ENCODE measurements at regions of chr12 and their contacts with region 1.

Region 1: DNA sequence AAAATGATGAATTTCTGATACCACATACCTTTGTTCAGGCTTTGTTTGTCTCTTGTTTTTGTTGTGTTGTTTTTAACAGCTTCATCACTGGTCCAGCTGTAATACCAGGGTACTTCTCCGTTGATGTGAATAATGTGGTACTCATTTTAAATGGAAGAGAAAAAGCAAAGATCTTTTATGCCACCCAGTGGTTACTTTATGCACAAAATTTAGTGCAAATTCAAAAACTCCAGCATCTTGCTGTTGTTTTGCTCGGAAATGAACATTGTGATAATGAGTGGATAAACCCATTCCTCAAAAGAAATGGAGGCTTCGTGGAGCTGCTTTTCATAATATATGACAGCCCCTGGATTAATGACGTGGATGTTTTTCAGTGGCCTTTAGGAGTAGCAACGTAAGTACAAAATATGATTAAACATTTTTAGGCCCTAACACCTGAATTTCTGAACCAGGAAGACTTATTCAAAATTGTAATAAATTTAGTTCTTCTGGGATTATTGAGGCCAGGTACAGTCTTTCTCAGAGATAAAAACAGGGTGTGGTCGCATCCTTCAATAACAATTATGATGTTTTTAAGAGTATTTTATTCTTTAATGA is 22.4 kb downstream of the RXYLT1 start:
- DNase-seq: no peak
- ATAC-seq: no peak
- H3K4me3 ChIP-seq: no peak overlapping the region
- H3K27ac ChIP-seq: no peak overlapping the region
- H3K4me1 ChIP-seq: no peaks in the 10 kb centered on the region
- H3K27me3 ChIP-seq: no peaks in the 10 kb centered on the region
- CTCF ChIP-seq: peak in 3 of 5 experiments; percentile 21 to 52 (median 51)
- POLR2A ChIP-seq: no peak

Region 2: DNA sequence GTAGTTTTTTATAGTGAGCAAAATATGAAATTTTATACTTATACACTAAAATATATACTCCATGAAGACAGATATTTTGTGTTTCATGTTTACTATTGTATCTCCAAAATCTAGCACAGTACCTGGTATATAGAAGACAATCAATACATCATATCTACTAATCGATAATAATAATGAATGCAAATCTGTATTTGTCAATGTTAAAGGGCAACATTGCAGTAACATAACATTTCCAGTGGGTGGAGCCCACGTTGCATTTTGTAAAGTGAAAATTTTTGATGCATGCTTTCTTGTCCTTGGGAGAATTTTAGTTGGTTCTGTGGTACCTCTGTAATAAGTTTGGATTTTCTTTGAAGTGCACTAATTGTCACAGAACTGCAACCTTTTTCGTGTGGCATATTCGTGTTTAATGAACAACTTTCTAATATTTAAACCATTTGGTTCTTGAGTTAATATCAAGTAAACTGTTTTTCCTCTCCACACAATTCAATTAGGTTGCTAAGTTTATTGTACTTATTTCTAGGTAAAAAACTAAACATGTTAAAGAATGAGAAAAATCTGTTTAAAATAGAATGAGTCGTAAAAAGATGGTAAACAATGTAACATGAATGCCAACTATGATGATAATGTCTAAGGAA is 698.5 kb before region 1 on chr12:
- in situ Hi-C with region 1: loop called in 1 of 4 experiments (anchors 25 kb)
- intact Hi-C with region 1: loop called (anchors 10 kb)
- DNase-seq: no peak
- ATAC-seq: no peak
- H3K4me3 ChIP-seq: no peak overlapping the region
- H3K27ac ChIP-seq: no peak overlapping the region
- H3K4me1 ChIP-seq: no peaks in the 10 kb centered on the region
- H3K27me3 ChIP-seq: no peaks in the 10 kb centered on the region
- CTCF ChIP-seq: peak in 4 of 5 experiments; percentile 12 to 61 (median 41)
- POLR2A ChIP-seq: no peak

Region 3: GRCh38 chr12:63882844-63883243 is 80.7 kb after region 1 on chr12:
- in situ Hi-C with region 1: no loop called
- intact Hi-C with region 1: no loop called
- DNase-seq: peak; percentile 29 to 37
- ATAC-seq: peak; percentile 71 to 83
- H3K4me3 ChIP-seq: no peak overlapping the region
- H3K27ac ChIP-seq: peak overlapping the region in 3 of 4 donors; percentile 11 to 53 (median 45)
- H3K4me1 ChIP-seq: peaks cover 0 to 4% of the 10 kb centered on the region in 2 donors
- H3K27me3 ChIP-seq: no peaks in the 10 kb centered on the region
- CTCF ChIP-seq: no peak
- POLR2A ChIP-seq: no peak

Region 4: DNA sequence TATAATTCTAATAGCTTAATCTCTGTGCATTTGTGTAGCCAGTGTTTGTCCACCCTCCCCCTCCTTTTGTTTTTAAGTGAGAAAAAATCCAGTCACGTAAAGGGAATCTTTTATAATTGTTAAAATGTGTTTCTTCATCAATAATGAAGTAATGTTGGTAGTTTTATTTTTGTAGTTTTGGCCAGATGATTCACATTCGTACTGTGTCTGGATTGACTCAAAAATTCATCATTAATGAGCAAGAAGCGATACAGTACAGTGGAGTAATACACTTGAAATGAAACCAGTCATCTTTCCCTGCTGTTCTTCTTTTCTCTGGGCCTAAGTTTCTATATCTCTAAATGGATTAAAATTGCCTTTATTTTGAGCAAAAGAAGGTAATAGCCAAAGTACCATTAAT is 128.9 kb after region 1 on chr12:
- in situ Hi-C with region 1: no loop called
- intact Hi-C with region 1: no loop called
- DNase-seq: no peak
- ATAC-seq: no peak
- H3K4me3 ChIP-seq: no peak overlapping the region
- H3K27ac ChIP-seq: no peak overlapping the region
- H3K4me1 ChIP-seq: no peaks in the 10 kb centered on the region
- H3K27me3 ChIP-seq: no peaks in the 10 kb centered on the region
- CTCF ChIP-seq: no peak
- POLR2A ChIP-seq: no peak

Region 5: GRCh38 chr12:64039281-64039871 is 237.3 kb after region 1 on chr12:
- in situ Hi-C with region 1: no loop called
- intact Hi-C with region 1: no loop called
- DNase-seq: no peak
- ATAC-seq: peak; percentile 44 to 54
- H3K4me3 ChIP-seq: no peak overlapping the region
- H3K27ac ChIP-seq: no peak overlapping the region
- H3K4me1 ChIP-seq: peaks cover 0 to 7% of the 10 kb centered on the region in 2 donors
- H3K27me3 ChIP-seq: no peaks in the 10 kb centered on the region
- CTCF ChIP-seq: no peak
- POLR2A ChIP-seq: no peak